ENCODE measurements at regions of chr1 and their contacts with region 1.

Region 1: DNA sequence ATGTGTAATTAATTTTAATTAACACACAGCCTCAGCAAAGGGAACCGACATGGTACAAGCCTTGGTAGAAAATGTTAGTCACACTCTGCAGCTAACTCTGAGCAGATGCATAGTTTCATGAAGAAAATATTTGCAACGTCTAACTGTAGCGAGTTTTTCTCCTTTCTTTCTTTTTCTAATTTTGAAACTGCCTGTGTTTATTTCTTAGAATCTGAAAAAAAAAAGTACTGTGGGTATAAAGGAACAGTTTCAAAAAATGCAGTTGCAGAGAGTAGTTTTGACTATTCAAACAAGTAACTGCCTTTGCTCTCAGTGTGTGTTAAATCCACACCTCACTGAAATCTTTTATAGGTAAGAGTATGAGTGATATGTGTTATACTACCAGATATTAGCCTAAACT is 149.9 kb upstream of the C1orf105 start:
- DNase-seq: no peak
- ATAC-seq: no peak
- H3K4me3 Mint-ChIP-seq: no peak overlapping the region
- H3K27ac Mint-ChIP-seq: no peak overlapping the region
- H3K4me1 Mint-ChIP-seq: peaks cover 28% of the 10 kb centered on the region
- H3K27me3 Mint-ChIP-seq: no peaks in the 10 kb centered on the region
- CTCF ChIP-seq: no peak

Region 2: DNA sequence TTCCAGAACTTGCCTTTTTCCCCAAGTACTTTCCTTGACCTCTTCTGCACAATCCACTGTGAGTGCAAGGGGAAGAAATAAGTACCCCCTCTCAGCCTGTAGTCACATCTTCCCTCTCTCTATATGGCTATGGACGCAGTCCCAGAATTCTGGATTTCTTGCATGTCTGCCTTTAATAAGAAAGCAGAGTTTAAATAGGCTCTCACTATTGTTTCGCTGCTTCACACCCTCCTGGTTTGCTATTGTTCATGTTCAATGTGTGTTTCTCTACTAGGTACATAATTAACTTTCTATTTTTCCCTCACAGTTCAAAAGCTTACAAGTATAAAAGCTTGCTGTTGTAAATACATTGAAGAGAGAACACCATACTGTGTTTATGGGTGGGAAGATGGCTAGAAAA is 31.6 kb before region 1 on chr1:
- CTCF ChIA-PET with region 1: no interaction called
- POLR2A ChIA-PET with region 1: interaction called, 12 read pairs
- DNase-seq: no peak
- ATAC-seq: no peak
- H3K4me3 Mint-ChIP-seq: no peak overlapping the region
- H3K27ac Mint-ChIP-seq: no peak overlapping the region
- H3K4me1 Mint-ChIP-seq: no peaks in the 10 kb centered on the region
- H3K27me3 Mint-ChIP-seq: no peaks in the 10 kb centered on the region
- CTCF ChIP-seq: no peak

Measured in WTC11 (cell line).